Uterus (tissue), 4 donors: ENCODE measurements at regions of chr5 and their contacts with region 1.

Region 1: GRCh38 chr5:162132348-162132747 is 64.8 kb downstream of the GABRG2 start:
- DNase-seq: no peak
- H3K4me3 ChIP-seq: no peak overlapping the region
- H3K27ac ChIP-seq: no peak overlapping the region
- H3K4me1 ChIP-seq: no peaks in the 10 kb centered on the region
- H3K27me3 ChIP-seq: no peaks in the 10 kb centered on the region
- CTCF ChIP-seq: no peak
- POLR2A ChIP-seq: no peak

Region 2: GRCh38 chr5:160978944-160979343 is 1153.4 kb before region 1 on chr5:
- intact Hi-C with region 1: no loop called
- DNase-seq: no peak
- H3K4me3 ChIP-seq: no peak overlapping the region
- H3K27ac ChIP-seq: no peak overlapping the region
- H3K4me1 ChIP-seq: no peaks in the 10 kb centered on the region
- H3K27me3 ChIP-seq: no peaks in the 10 kb centered on the region
- CTCF ChIP-seq: no peak
- POLR2A ChIP-seq: no peak

Region 3: DNA sequence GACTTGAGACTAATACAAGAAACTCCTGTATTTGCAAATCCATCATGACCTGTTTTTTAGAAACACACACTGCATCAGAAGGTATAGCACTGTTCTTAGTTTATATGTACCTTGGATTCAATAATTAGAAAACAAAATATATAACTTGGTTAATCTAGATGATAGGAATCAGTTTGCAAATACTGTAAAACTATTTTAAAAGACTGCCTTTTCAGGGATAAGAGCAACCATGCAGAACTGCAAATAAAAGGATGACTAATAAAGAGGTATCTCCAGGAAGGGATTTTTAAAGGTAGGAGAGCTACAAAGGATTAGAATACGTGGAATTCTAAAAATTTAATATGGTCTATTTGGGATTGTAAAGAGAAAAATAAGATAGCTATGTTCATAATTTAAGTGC is 275.0 kb before region 1 on chr5:
- intact Hi-C with region 1: no loop called
- DNase-seq: no peak
- H3K4me3 ChIP-seq: no peak overlapping the region
- H3K27ac ChIP-seq: no peak overlapping the region
- H3K4me1 ChIP-seq: no peaks in the 10 kb centered on the region
- H3K27me3 ChIP-seq: no peaks in the 10 kb centered on the region
- CTCF ChIP-seq: no peak
- POLR2A ChIP-seq: no peak

Region 4: GRCh38 chr5:162047279-162047678 is 85.1 kb before region 1 on chr5:
- intact Hi-C with region 1: loop called (anchors 5 kb)
- DNase-seq: no peak
- H3K4me3 ChIP-seq: no peak overlapping the region
- H3K27ac ChIP-seq: no peak overlapping the region
- H3K4me1 ChIP-seq: no peaks in the 10 kb centered on the region
- H3K27me3 ChIP-seq: no peaks in the 10 kb centered on the region
- CTCF ChIP-seq: no peak
- POLR2A ChIP-seq: no peak